GM12878 (cell line): ENCODE measurements at regions of chr11 and their contacts with region 1.

Region 1: GRCh38 chr11:7520981-7521487 is 7.2 kb downstream of the PPFIBP2 start:
- DNase-seq: no peak
- ATAC-seq: peak; percentile 78
- H3K4me3 ChIP-seq: peak overlapping the region; percentile 71
- H3K27ac ChIP-seq: peak overlapping the region; percentile 100
- H3K4me1 ChIP-seq: peaks cover 58% of the 10 kb centered on the region
- H3K27me3 ChIP-seq: no peaks in the 10 kb centered on the region
- CTCF ChIP-seq: no peak
- EP300 ChIP-seq: peak in 1 of 2 experiments; percentile 70; a peak in 1 of 4 replicates
- POLR2A ChIP-seq: peak; percentile 50; the same call in 1 of the 2 replicates
- RAD21 ChIP-seq: no peak

Region 2: GRCh38 chr11:6481012-6481923 is 1039.8 kb before region 1 on chr11 and contains the starts of genes ARFIP2 and TIMM10B:
- CTCF ChIA-PET with region 1: no interaction called
- POLR2A ChIA-PET with region 1: no interaction called
- RAD21 ChIA-PET with region 1: no interaction called
- SMC1A ChIA-PET with region 1: no interaction called
- in situ Hi-C with region 1: no loop called
- intact Hi-C with region 1: loop called (anchors 10 kb)
- DNase-seq: peak; percentile 91
- ATAC-seq: peak; percentile 98
- H3K4me3 ChIP-seq: peak within 1 kb of the TSS; percentile 98
- H3K27ac ChIP-seq: peak within 1 kb of the TSS; percentile 80
- H3K4me1 ChIP-seq: peaks cover 19% of the 10 kb centered on the region
- H3K27me3 ChIP-seq: no peaks in the 10 kb centered on the region
- CTCF ChIP-seq: no peak
- EP300 ChIP-seq: no peak
- POLR2A ChIP-seq: peak; percentile 98
- RAD21 ChIP-seq: no peak
- polyA plus RNA-seq, gene ARFIP2: 11.7 to 18.9 TPM
- polyA plus RNA-seq, gene TIMM10B: 93.3 to 126 TPM

Region 3: DNA sequence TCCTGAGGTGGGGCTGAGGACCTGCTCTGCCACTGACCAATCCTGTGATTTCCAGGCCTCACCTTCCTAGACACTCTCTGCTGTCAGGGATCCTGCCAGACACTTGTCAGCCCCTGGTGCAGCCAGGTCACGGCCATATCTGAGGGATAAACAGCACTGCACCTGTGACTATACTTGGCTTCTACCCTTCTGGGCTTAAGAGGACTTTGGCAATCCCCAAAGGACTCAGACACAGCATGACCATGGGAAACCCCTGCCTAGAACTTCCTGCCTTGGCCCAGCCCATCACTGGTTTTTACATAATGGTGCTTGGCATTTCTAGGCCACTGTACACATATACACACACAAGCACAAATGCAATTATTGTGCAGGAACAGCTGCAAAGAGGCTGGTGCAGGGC is 47.3 kb before region 1 on chr11:
- CTCF ChIA-PET with region 1: interaction called, 3 read pairs
- POLR2A ChIA-PET with region 1: interaction called, 5 read pairs
- RAD21 ChIA-PET with region 1: interaction called, 4 read pairs
- SMC1A ChIA-PET with region 1: interaction called, 11 read pairs
- in situ Hi-C with region 1: no loop called
- intact Hi-C with region 1: no loop called
- DNase-seq: peak; percentile 40
- ATAC-seq: peak; percentile 98
- H3K4me3 ChIP-seq: no peak overlapping the region
- H3K27ac ChIP-seq: peak overlapping the region; percentile 18; the same call in 1 of the 2 replicates
- H3K4me1 ChIP-seq: peaks cover 10% of the 10 kb centered on the region
- H3K27me3 ChIP-seq: no peaks in the 10 kb centered on the region
- CTCF ChIP-seq: no peak
- EP300 ChIP-seq: no peak
- POLR2A ChIP-seq: no peak
- RAD21 ChIP-seq: no peak

Region 4: GRCh38 chr11:7536100-7536499 is 15.1 kb after region 1 on chr11:
- CTCF ChIA-PET with region 1: interaction called, 32 read pairs
- POLR2A ChIA-PET with region 1: interaction called, 78 read pairs
- RAD21 ChIA-PET with region 1: interaction called, 34 read pairs
- SMC1A ChIA-PET with region 1: interaction called, 107 read pairs
- in situ Hi-C with region 1: no loop called
- intact Hi-C with region 1: no loop called
- DNase-seq: no peak
- ATAC-seq: no peak
- H3K4me3 ChIP-seq: no peak overlapping the region
- H3K27ac ChIP-seq: no peak overlapping the region
- H3K4me1 ChIP-seq: peaks cover 73% of the 10 kb centered on the region
- H3K27me3 ChIP-seq: no peaks in the 10 kb centered on the region
- CTCF ChIP-seq: peak in 2 of 3 experiments; percentile 43 to 45; a peak in 3 of 6 replicates
- EP300 ChIP-seq: no peak
- POLR2A ChIP-seq: no peak
- RAD21 ChIP-seq: peak; percentile 11; the same call in 1 of the 2 replicates

Region 5: DNA sequence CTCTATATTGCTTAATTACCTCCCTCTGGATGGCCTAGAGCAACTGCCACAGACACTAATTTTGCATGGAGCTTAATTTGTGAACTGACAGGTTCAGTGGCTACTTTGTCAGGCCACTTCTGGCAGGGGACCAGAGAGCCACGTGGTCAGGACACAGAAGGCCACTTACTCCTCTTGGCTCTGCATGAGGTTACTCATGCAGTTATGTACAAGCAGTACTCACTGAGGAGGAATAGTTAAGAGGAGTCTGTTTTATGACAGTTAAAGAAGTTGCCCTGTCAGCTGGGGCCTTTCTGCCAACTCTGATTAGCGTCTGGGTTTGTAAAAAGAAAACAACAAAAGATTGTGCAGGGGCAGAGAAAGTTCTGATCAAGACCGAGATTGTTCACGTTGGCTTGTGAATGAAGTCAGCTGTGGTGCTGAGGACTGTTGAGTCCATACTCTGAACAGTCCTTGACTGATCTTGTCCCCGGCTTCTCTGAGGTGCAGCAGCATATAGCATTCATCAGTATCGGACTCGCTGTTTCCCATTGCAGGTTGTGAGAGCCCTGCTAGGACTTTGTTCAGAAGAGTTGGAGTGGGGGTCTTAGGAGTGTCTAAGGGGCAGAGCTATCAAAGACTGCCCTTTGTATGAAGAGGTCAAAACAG is 34.1 kb after region 1 on chr11:
- CTCF ChIA-PET with region 1: interaction called, 28 read pairs
- POLR2A ChIA-PET with region 1: interaction called, 16 read pairs
- RAD21 ChIA-PET with region 1: interaction called, 12 read pairs
- SMC1A ChIA-PET with region 1: interaction called, 60 read pairs
- in situ Hi-C with region 1: no loop called
- intact Hi-C with region 1: no loop called
- DNase-seq: no peak
- ATAC-seq: no peak
- H3K4me3 ChIP-seq: no peak overlapping the region
- H3K27ac ChIP-seq: no peak overlapping the region
- H3K4me1 ChIP-seq: peaks cover 16% of the 10 kb centered on the region
- H3K27me3 ChIP-seq: no peaks in the 10 kb centered on the region
- CTCF ChIP-seq: no peak
- EP300 ChIP-seq: no peak
- POLR2A ChIP-seq: no peak
- RAD21 ChIP-seq: no peak

Region 6: DNA sequence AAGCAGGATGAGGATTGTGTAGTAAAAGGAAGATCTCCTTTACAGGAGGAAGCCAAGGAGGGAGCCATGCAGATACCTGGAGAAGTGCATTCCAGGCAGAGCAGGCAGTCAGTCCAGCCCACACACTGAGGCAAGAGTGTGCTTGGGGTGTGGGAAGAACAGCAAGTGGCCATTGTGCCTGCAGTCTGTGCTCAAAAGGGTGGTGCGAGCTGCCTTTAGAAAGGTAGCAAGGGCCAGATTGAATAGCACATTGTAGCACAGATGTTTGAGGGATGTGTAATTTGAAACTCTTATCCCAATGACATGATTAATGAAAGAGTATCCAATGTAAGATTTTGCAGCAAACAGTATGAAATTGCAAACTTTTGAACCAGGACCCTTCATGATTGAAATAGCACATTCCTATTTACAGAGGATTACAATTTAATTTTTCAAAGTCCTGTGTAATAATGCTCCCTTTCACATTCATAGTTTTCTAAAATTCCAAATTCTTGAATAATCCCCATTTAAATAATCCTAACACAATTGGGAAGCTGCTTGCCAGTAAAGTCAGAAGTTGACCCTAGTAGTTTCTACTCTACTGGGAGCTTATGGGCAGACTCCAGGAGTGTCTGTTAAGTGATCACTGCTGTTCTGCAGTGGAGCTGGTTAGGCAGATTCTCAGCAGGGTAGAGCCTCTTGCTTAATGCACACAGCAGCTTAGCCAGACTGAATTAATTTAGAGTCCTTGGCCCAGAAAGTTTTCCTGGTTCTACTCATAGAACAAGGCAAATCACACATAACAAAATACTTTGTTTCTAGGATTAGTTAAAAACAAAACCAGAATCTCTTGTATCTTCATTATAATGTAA is 74.2 kb after region 1 on chr11:
- CTCF ChIA-PET with region 1: no interaction called
- POLR2A ChIA-PET with region 1: no interaction called
- RAD21 ChIA-PET with region 1: no interaction called
- SMC1A ChIA-PET with region 1: no interaction called
- in situ Hi-C with region 1: no loop called
- intact Hi-C with region 1: no loop called
- DNase-seq: no peak
- ATAC-seq: no peak
- H3K4me3 ChIP-seq: no peak overlapping the region
- H3K27ac ChIP-seq: no peak overlapping the region
- H3K4me1 ChIP-seq: peaks cover 15% of the 10 kb centered on the region
- H3K27me3 ChIP-seq: no peaks in the 10 kb centered on the region
- CTCF ChIP-seq: no peak
- EP300 ChIP-seq: no peak
- POLR2A ChIP-seq: no peak
- RAD21 ChIP-seq: no peak